ENCODE measurements at regions of chr17 and their contacts with region 1.

Region 1: DNA sequence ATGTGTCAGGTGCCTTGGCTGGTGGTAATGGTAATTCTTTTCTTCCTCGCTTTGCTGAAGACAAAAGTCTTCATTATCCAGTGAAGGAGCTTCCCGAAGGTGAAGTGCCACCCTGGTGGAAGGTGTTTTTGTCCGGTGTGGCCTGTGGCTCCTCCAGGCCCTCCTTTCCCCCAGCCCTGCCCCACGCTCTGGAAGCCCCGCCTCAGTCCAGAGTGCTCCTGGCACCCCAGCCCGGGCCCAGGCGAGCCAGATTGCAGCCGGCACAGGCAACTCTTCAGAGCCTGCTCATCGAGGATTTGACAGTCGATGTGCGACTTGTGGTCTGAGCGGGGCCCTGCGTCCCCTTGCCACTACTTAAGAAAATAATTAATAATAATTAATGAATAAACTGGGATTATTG is 93.7 kb downstream of the MGAT5B start:
- DNase-seq: peak in 1 of 2 donors; percentile 27
- H3K4me3 ChIP-seq: no peak overlapping the region
- H3K27ac ChIP-seq: peak overlapping the region in 1 of 2 donors; percentile 54
- H3K4me1 ChIP-seq: no peaks in the 10 kb centered on the region
- H3K27me3 ChIP-seq: peaks cover 0 to 6% of the 10 kb centered on the region in 2 donors
- CTCF ChIP-seq: no peak
- POLR2A ChIP-seq: no peak

Region 2: GRCh38 chr17:76147211-76148014 is 814.5 kb before region 1 on chr17:
- intact Hi-C with region 1: no loop called
- DNase-seq: peak in 1 of 2 donors; percentile 14
- H3K4me3 ChIP-seq: no peak overlapping the region
- H3K27ac ChIP-seq: no peak overlapping the region
- H3K4me1 ChIP-seq: no peaks in the 10 kb centered on the region
- H3K27me3 ChIP-seq: no peaks in the 10 kb centered on the region
- CTCF ChIP-seq: peak; percentile 41 to 60 (median 55)
- POLR2A ChIP-seq: no peak

Region 3: DNA sequence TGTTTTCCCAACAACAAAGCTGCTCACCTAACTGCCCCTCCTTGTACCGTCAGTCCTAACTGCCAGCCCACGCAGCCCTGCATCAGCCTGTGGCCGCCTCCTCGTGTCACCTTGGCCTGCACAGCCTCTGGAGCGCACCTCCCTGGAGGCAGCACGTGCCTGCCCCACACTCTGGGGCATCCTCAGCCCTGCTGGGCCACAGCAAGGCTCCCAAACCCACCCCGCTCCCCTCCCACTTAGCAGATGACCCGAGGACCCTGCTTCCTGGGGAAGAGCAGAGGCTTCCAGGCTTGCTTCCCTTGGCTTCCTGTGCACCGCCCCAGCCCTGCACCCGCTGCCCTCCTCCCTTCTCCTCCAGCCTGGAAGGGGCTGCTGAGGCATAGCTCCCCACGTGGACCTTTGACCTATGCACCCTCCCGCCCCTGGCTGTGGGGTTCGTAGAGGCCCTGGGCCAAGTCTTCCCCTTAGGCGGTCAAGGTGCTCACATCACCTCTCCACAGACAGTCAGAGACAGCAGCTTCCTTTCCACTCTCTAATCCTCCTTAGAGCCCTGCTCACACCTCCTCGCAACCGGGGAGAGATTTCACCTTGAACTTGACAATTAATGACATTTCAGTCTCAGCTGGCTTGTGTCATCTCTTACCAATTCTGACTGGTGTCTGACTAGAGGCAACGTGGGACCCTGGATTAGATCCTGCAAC is 21.4 kb after region 1 on chr17:
- intact Hi-C with region 1: loop called (anchors 1 kb)
- DNase-seq: no peak
- H3K4me3 ChIP-seq: no peak overlapping the region
- H3K27ac ChIP-seq: no peak overlapping the region
- H3K4me1 ChIP-seq: no peaks in the 10 kb centered on the region
- H3K27me3 ChIP-seq: peaks cover 0 to 16% of the 10 kb centered on the region in 2 donors
- CTCF ChIP-seq: no peak
- POLR2A ChIP-seq: no peak

Region 4: DNA sequence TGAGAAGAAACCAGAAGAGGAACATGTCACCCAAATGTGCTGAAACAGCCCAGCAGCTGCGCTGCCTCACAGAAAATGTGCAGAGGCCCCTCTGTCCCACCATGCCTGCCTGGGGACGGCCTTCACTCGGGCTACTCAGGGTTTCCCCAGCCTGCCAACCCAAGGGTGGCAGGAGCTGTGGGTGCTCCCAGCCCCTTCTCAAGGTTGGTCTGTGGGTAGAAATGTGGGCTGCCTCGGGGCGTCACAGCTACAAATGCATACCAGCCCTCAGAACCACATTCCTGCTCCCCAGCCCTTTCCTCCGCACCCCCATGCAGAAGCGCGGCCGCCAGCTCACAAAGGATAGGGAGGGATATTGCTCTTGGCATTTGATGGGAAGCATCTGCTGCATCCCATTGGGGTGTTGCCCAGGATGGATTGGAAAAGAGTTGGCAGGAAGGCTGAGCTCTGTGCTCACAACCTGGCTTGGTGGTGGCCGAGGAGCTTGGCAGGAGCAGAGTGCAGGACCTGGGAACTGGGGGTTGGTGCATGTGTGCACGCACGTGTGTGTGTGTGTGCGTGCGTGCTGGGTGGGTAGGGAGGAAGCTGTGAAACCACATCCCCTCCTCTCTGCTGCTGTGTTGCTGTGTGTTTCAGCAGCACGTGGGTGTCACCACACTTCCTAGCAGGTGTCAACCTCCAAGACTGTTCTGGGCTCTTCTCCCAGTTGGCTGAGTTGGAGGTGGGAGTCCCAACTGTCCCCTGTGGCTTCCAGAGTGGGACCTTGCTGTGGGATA is 483.3 kb after region 1 on chr17:
- intact Hi-C with region 1: no loop called
- DNase-seq: no peak
- H3K4me3 ChIP-seq: no peak overlapping the region
- H3K27ac ChIP-seq: peak overlapping the region; percentile 73 to 87
- H3K4me1 ChIP-seq: peaks cover 13 to 37% of the 10 kb centered on the region in 2 donors
- H3K27me3 ChIP-seq: no peaks in the 10 kb centered on the region
- CTCF ChIP-seq: no peak
- POLR2A ChIP-seq: no peak

Region 5: DNA sequence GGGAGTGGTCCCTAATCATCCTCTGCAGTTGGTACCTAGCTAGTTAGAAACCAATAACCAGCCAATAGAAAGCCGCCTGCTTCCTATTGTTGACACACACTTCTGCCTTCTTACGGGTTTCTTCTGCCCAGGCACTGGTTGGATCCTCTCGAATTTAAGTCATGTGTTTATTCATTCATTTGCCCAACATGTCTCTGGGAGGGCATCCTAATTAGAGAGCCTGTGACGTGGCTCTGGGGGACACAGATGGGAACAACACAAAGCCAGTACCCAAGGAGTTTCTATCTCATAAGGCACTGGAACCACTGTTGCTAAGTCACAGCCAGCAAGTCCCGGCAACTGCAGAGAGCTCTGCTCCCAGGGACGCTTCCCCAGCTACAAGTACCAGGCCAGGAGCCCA is 696.0 kb after region 1 on chr17:
- intact Hi-C with region 1: no loop called
- DNase-seq: no peak
- H3K4me3 ChIP-seq: no peak overlapping the region
- H3K27ac ChIP-seq: no peak overlapping the region
- H3K4me1 ChIP-seq: no peaks in the 10 kb centered on the region
- H3K27me3 ChIP-seq: peaks cover 0 to 10% of the 10 kb centered on the region in 2 donors
- CTCF ChIP-seq: no peak
- POLR2A ChIP-seq: no peak

Measured in breast epithelium (tissue), 4 donors.